Common myeloid progenitor, CD34-positive (primary cell): ENCODE measurements at regions of chr3 and their contacts with region 1.

Region 1: DNA sequence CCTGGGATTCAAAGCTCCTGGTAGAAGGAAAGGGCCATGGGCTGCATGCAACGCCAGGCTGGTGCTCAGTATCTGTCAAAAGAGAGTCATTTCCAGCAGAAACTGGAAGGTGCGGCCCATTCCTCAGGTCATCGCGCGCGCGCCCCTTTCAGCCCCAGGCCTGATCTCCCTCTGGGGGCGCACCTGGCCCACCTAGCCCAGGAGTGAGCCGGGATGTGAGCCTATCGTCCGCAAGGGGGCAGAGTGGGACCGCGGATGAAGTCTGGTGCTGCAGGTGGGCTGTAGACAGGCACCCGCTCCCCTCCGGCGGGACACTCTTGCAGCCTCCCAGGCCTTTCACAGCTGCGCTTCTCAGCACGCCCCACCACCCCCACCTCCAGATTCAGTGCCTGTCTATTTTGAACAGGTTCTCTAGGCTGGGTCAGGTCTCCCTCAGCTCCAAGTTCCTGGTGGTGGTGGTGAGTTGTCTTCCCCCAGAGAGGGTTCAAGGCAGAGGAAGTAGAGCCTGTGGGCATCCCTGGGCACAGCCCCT is 5.8 kb upstream of the RPL29 start:
- DNase-seq: peak; percentile 83 to 91 (median 88)
- H3K4me3 ChIP-seq: peak overlapping the region in 2 of 7 experiments; percentile 11 to 25
- H3K27ac ChIP-seq: no peak overlapping the region
- H3K4me1 ChIP-seq: peaks cover 0 to 32% (median 19%) of the 10 kb centered on the region in 4 experiments
- H3K27me3 ChIP-seq: no peaks in the 10 kb centered on the region

Region 2: GRCh38 chr3:51581529-51581928 is 420.0 kb before region 1 on chr3:
- CTCF ChIA-PET with region 1: no interaction called
- POLR2A ChIA-PET with region 1: no interaction called
- DNase-seq: no peak
- H3K4me3 ChIP-seq: no peak overlapping the region
- H3K27ac ChIP-seq: no peak overlapping the region
- H3K4me1 ChIP-seq: peaks cover 0 to 13% (median 6%) of the 10 kb centered on the region in 4 experiments
- H3K27me3 ChIP-seq: no peaks in the 10 kb centered on the region

Region 3: GRCh38 chr3:51620543-51620942 is 381.0 kb before region 1 on chr3:
- CTCF ChIA-PET with region 1: no interaction called
- POLR2A ChIA-PET with region 1: no interaction called
- DNase-seq: peak; percentile 23 to 69 (median 46)
- H3K4me3 ChIP-seq: no peak overlapping the region
- H3K27ac ChIP-seq: peak overlapping the region; percentile 18 to 40
- H3K4me1 ChIP-seq: peaks cover 3 to 43% (median 19%) of the 10 kb centered on the region in 4 experiments
- H3K27me3 ChIP-seq: no peaks in the 10 kb centered on the region

Region 4: DNA sequence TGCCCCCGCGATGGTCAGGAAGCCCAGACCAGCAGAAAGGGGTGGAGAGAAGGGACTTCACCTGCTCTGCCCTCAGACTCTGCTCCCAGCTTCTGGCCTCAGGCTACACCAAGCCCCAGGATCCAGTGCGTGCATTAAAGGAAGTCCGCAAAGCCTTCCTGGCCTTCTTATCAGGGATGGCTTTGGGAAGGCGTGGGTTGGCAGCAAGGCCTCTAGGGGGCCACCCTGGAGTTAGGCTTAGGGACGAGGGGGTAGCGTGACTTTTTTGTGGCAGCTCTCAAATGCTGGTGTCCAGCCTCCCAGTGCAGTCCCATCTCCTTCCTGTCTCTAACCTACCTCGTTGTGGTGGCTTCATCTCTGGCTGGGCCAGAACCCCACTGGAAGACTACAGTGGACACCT is 13.1 kb after region 1 on chr3:
- CTCF ChIA-PET with region 1: interaction called, 64 read pairs
- POLR2A ChIA-PET with region 1: no interaction called
- DNase-seq: peak in 2 of 3 donors; percentile 18 to 33
- H3K4me3 ChIP-seq: no peak overlapping the region
- H3K27ac ChIP-seq: no peak overlapping the region
- H3K4me1 ChIP-seq: peaks cover 0 to 16% (median 6%) of the 10 kb centered on the region in 4 experiments
- H3K27me3 ChIP-seq: no peaks in the 10 kb centered on the region

Region 5: GRCh38 chr3:52108302-52109232 is 107.1 kb after region 1 on chr3:
- CTCF ChIA-PET with region 1: interaction called, 11 read pairs
- POLR2A ChIA-PET with region 1: no interaction called
- DNase-seq: peak in 2 of 3 donors; percentile 45 to 69
- H3K4me3 ChIP-seq: no peak overlapping the region
- H3K27ac ChIP-seq: peak overlapping the region in 1 of 2 experiments; percentile 6
- H3K4me1 ChIP-seq: peaks cover 13 to 31% (median 24%) of the 10 kb centered on the region in 4 experiments
- H3K27me3 ChIP-seq: no peaks in the 10 kb centered on the region

Region 6: GRCh38 chr3:52136513-52136912 is 135.0 kb after region 1 on chr3:
- CTCF ChIA-PET with region 1: interaction called, 169 read pairs
- POLR2A ChIA-PET with region 1: no interaction called
- DNase-seq: no peak
- H3K4me3 ChIP-seq: no peak overlapping the region
- H3K27ac ChIP-seq: peak overlapping the region in 1 of 2 experiments; percentile 32
- H3K4me1 ChIP-seq: peaks cover 0 to 11% (median 4%) of the 10 kb centered on the region in 4 experiments
- H3K27me3 ChIP-seq: no peaks in the 10 kb centered on the region

Region 7: GRCh38 chr3:52144034-52144795 is 142.7 kb after region 1 on chr3:
- CTCF ChIA-PET with region 1: interaction called, 169 read pairs
- POLR2A ChIA-PET with region 1: no interaction called
- DNase-seq: peak; percentile 86 to 94 (median 91)
- H3K4me3 ChIP-seq: no peak overlapping the region
- H3K27ac ChIP-seq: no peak overlapping the region
- H3K4me1 ChIP-seq: peaks cover 0 to 4% (median 4%) of the 10 kb centered on the region in 4 experiments
- H3K27me3 ChIP-seq: no peaks in the 10 kb centered on the region

Region 8: DNA sequence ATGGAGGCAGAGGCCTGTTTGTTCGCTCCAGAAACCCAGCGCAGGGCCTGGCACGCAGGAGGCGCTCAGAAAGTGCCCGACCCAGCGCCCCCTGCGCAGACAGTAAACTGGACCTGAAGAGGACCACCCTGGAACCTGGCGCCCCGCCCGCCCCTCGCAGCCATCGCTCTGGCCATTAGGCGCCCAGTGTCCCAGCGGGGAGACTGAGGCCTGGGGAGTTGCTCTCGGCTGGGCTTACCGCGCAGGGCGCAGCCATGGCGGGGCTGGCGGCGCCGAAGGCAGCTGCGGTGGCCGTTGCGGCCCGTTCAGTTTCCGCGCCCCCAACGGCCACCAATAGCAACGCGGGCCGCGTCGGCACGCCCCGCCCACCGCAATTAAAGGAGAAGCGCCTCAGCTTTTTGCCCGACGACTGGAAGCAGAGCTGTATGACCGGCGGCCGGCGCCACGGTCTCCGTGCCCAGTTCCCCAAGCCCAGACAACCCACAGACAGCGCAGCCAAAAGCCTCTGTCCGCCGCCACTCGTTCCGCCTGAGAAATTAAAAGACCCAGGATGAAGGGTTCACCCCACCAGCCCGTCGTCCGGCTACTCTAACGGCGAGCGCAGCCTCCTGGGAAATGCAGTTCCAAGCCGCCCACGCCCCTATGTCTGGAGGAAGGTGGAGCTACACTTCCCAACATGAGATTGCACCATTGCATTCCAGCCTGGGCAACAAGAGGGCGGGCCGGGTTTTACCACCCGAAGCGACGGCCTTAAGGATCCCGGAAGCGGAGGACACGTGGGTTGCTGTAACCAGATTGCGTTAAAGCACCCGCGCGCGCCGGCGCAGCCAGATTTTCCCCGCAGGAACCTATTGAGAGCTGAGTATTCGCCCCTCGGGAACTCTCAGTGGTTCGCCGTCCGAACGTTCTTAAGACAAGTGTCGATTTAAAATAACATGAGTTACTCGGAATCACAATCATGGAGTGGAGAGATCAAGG is 152.9 kb after region 1 on chr3 and contains the start of gene POC1A:
- CTCF ChIA-PET with region 1: interaction called, 12 read pairs
- POLR2A ChIA-PET with region 1: no interaction called
- DNase-seq: peak; percentile 94 to 98 (median 97)
- H3K4me3 ChIP-seq: peak within 1 kb of the TSS; percentile 72 to 94 (median 81)
- H3K27ac ChIP-seq: peak within 1 kb of the TSS; percentile 40 to 78
- H3K4me1 ChIP-seq: peaks cover 0 to 16% (median 15%) of the 10 kb centered on the region in 4 experiments
- H3K27me3 ChIP-seq: no peaks in the 10 kb centered on the region